Dorsolateral prefrontal cortex (tissue), 120 donors: ENCODE measurements at regions of chr4 and their contacts with region 1.

Region 1: DNA sequence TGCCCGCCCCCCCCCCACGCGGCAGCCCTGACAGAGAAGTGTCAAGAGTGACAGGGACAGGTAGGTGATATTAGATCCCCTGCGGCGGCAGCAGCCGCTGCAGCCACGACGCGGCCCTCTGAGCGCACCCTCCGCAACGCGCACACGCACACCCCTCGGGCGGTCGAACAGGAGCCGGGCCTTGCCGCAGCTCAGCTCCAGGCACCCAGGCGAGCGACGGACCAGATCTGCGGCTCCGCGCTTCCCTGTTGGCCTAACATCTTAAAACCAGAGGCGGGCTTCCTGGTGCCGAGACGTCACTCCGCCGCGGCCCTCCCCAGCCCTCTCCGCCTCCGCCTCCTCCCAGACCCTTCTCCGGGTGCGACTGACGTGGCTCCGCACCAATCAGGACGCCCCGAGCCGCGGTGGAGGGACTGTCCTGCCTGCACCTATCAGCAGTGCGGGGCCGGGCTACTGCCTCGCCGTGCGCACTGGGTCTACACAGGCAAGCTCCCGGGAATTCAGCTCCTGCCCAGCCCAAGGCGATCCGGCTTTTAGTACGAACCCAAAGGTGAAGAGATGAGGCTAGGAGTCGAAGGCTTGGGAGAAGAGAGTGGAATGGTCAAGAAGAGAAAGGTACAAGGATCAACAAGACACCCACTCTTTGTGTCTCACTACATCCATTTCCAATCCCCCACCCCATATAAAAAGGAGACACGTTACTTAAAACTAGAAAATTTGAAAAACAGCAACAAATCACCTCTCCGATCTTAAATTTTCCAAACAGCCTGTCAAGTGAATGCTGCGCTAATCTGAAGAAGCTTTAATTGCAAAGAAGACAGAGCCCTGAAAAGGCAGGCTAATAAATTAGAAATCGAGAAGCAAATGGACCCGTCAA is at the start of gene PITX2:
- DNase-seq: no peak
- H3K4me3 ChIP-seq: peak within 1 kb of the TSS in 42 of 59 donors; percentile 0 to 59 (median 31)
- H3K27ac ChIP-seq: no peak within 1 kb of the TSS
- H3K27me3 ChIP-seq: peaks cover 53 to 100% (median 100%) of the 10 kb centered on the region in 45 donors
- CTCF ChIP-seq: no peak
- total RNA-seq, gene PITX2: not detected

Region 2: DNA sequence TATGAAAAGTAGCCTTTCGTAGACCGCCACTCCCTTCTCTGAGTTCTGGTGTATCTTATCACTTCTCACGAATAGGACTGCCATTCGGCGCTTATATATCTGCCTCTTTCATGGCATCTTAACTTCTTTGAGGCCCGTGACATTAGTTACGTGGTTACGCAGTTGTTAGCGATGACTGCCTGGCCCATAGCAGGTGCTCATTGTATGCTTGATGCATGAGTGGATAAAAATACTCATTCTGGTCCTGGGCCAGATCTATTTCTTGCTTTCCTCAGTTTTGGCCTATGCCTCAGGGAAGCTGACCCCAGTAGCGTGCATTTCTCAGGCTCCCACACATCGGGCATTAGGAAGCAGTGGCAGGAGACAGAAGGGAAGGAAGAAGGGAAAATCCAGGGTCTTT is 60.5 kb after region 1 on chr4:
- intact Hi-C with region 1: no loop called
- DNase-seq: no peak
- H3K4me3 ChIP-seq: no peak overlapping the region
- H3K27ac ChIP-seq: no peak overlapping the region
- H3K27me3 ChIP-seq: peaks cover 0 to 16% (median under 1%) of the 10 kb centered on the region in 45 donors
- CTCF ChIP-seq: no peak

Region 3: DNA sequence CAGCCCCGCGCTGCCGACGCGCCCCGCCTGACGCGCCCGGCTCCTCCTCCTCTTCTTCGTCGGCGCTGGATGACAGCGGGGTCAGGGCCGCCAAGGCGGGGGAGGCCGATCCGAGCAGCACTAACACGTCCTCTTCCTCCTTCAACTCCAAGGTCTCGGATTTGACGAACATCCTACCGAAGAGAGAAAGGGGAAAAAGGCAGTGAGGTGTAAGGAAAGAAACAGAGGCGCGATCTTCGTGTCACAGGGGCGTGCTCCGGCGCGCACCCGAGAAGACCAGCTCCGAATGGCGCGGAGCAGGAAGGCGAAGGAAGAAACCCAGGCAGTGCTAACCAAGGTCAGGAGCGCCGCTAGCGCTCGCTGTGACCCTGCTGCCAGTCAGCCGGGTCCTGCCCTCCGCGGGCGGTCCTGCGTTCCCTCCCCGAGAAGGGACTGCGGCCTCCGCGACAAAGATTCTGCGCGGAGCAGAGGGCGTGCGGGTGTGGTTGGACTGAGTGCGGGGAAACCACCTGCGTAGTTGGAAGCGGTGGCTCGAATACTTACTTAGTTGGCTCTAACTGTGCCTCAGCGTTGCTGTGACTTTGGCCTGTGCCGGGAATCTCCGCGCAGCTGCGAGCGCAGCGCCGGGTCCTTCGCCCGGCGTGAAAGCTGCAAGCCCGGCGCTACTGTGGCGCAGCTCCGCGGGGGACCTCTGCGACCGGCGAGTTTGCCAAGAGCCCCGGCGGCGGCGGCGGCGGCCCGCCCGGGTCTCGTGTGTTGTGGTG is 1892.4 kb after region 1 on chr4:
- intact Hi-C with region 1: loop called (anchors 10 kb)
- DNase-seq: peak in 1 of 10 donors; percentile 45
- H3K4me3 ChIP-seq: peak overlapping the region; percentile 35 to 77 (median 58)
- H3K27ac ChIP-seq: no peak overlapping the region
- H3K27me3 ChIP-seq: peaks cover 9 to 100% (median 97%) of the 10 kb centered on the region in 45 donors
- CTCF ChIP-seq: no peak

Region 4: GRCh38 chr4:112523764-112524505 is 1900.9 kb after region 1 on chr4:
- intact Hi-C with region 1: loop called (anchors 10 kb)
- DNase-seq: peak in 1 of 10 donors; percentile 50
- H3K4me3 ChIP-seq: peak overlapping the region in 49 of 59 donors; percentile 1 to 61 (median 38)
- H3K27ac ChIP-seq: no peak overlapping the region
- H3K27me3 ChIP-seq: peaks cover 18 to 77% (median 64%) of the 10 kb centered on the region in 45 donors
- CTCF ChIP-seq: peak in 54 of 56 donors; percentile 37 to 80 (median 60)